Activated CD8-positive, alpha-beta memory T cell treated with anti-CD3 and anti-CD28 coated beads, Interleukin-2, amount 10 ng/mL, durations not matched to agents 7 days and 5 days (primary cell): ENCODE measurements at regions of chr3 and their contacts with region 1.

Region 1: DNA sequence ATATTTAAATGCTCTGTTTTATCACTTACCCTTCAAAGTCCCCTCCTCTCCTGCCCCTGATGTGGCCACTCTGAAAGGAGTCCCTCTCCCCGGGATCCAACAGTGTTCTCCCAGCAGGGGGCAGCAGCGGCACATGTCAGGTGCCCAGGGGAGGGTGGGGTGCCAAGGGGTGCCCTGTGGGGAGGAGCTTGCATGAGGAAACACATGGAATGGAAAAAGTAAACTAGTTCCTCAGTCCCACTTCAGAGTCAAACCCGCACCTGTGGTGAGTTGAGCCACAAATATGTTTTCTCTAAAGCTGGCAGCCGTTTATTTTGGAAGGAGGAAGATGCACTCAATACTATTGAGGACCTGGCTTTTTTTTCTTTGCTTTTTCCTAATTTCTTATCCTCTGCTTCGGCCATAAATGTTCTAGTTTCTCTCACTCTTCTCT is 30.1 kb upstream of the NRROS start:
- DNase-seq: peak; percentile 97
- ATAC-seq: peak; percentile 93
- H3K4me3 Mint-ChIP-seq: peak overlapping the region; percentile 51
- H3K27ac Mint-ChIP-seq: peak overlapping the region; percentile 87
- H3K4me1 Mint-ChIP-seq: peaks cover 45% of the 10 kb centered on the region
- H3K27me3 Mint-ChIP-seq: no peaks in the 10 kb centered on the region

Region 2: GRCh38 chr3:196486263-196486662 is 123.1 kb before region 1 on chr3:
- CTCF ChIA-PET with region 1: no interaction called
- DNase-seq: no peak
- ATAC-seq: no peak
- H3K4me3 Mint-ChIP-seq: no peak overlapping the region
- H3K27ac Mint-ChIP-seq: no peak overlapping the region
- H3K4me1 Mint-ChIP-seq: peaks cover 3% of the 10 kb centered on the region
- H3K27me3 Mint-ChIP-seq: no peaks in the 10 kb centered on the region

Region 3: GRCh38 chr3:196528639-196529233 is 80.6 kb before region 1 on chr3:
- CTCF ChIA-PET with region 1: interaction called, 15 read pairs
- DNase-seq: peak; percentile 85
- ATAC-seq: peak; percentile 98
- H3K4me3 Mint-ChIP-seq: peak overlapping the region; percentile 65
- H3K27ac Mint-ChIP-seq: peak overlapping the region; percentile 54
- H3K4me1 Mint-ChIP-seq: peaks cover 17% of the 10 kb centered on the region
- H3K27me3 Mint-ChIP-seq: peaks cover 16% of the 10 kb centered on the region

Region 4: GRCh38 chr3:196632046-196632751 is 22.8 kb after region 1 on chr3:
- CTCF ChIA-PET with region 1: interaction called, 113 read pairs
- DNase-seq: peak; percentile 98
- ATAC-seq: peak; percentile 85
- H3K4me3 Mint-ChIP-seq: peak overlapping the region; percentile 71
- H3K27ac Mint-ChIP-seq: peak overlapping the region; percentile 96
- H3K4me1 Mint-ChIP-seq: peaks cover 59% of the 10 kb centered on the region
- H3K27me3 Mint-ChIP-seq: no peaks in the 10 kb centered on the region

Region 5: DNA sequence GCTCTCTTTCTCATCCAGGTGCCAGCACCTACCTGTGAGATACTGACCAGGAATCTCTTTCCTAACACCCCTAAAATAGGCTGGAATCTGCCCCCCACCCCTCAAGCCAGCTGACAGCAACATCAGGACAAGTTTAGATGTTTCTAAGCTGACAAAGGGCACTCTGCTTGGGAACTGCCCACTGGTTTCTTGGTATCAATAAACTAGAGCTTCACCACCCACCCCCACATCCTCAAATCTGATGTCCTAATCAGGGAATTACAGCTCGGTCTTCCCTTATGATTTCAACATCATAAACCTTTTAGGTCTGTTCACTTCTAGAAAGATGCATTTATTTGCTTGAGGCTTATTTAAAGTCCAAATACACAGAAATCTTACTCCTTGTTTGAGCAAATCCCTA is 68.0 kb after region 1 on chr3:
- CTCF ChIA-PET with region 1: interaction called, 13 read pairs
- DNase-seq: no peak
- ATAC-seq: no peak
- H3K4me3 Mint-ChIP-seq: no peak overlapping the region
- H3K27ac Mint-ChIP-seq: no peak overlapping the region
- H3K4me1 Mint-ChIP-seq: peaks cover 14% of the 10 kb centered on the region
- H3K27me3 Mint-ChIP-seq: no peaks in the 10 kb centered on the region

Region 6: DNA sequence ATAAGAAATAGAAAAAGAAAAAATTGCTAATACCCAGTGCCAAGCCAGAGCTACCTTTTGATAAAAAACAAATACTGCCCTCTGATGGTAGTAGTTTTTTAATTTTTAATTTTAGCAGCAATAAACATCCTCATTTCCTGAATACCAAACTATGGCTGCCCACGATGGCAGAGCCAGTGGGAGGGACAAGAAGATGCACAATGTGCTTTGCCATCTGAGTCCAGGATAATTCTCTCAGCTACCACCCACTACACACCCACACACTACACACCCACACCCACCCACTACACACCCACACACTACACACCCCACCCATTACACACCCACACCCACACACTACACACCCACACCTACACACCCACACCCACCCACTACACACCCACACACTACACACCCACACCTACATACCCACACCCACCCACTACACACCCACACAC is 84.9 kb after region 1 on chr3:
- CTCF ChIA-PET with region 1: interaction called, 219 read pairs
- DNase-seq: peak; percentile 48
- ATAC-seq: peak; percentile 79
- H3K4me3 Mint-ChIP-seq: no peak overlapping the region
- H3K27ac Mint-ChIP-seq: no peak overlapping the region
- H3K4me1 Mint-ChIP-seq: peaks cover 4% of the 10 kb centered on the region
- H3K27me3 Mint-ChIP-seq: no peaks in the 10 kb centered on the region